CD4-positive, alpha-beta memory T cell (primary cell): ENCODE measurements at regions of chr14 and their contacts with region 1.

Region 1: GRCh38 chr14:71753126-71753830 is 179.0 kb upstream of the RGS6 start:
- DNase-seq: peak; percentile 53 to 62 (median 58)
- H3K4me3 ChIP-seq: no peak overlapping the region
- H3K4me3 Mint-ChIP-seq: no peak overlapping the region
- H3K27ac ChIP-seq: no peak overlapping the region
- H3K27ac Mint-ChIP-seq: no peak overlapping the region
- H3K4me1 ChIP-seq: peaks cover 6% of the 10 kb centered on the region
- H3K4me1 Mint-ChIP-seq: no peaks in the 10 kb centered on the region
- H3K27me3 ChIP-seq: no peaks in the 10 kb centered on the region
- H3K27me3 Mint-ChIP-seq: peaks cover 0 to 2% of the 10 kb centered on the region in 2 donors

Region 2: GRCh38 chr14:71103662-71104484 is 649.4 kb before region 1 on chr14:
- CTCF ChIA-PET with region 1: interaction called, 6 read pairs
- POLR2A ChIA-PET with region 1: no interaction called
- intact Hi-C with region 1: loop called (anchors 1 kb)
- DNase-seq: peak in 4 of 5 donors; percentile 40 to 50 (median 47)
- H3K4me3 ChIP-seq: no peak overlapping the region
- H3K4me3 Mint-ChIP-seq: no peak overlapping the region
- H3K27ac ChIP-seq: no peak overlapping the region
- H3K27ac Mint-ChIP-seq: peak overlapping the region in 4 of 7 donors; percentile 11 to 22 (median 16)
- H3K4me1 ChIP-seq: peaks cover 8% of the 10 kb centered on the region
- H3K4me1 Mint-ChIP-seq: peaks cover 10 to 24% (median 18%) of the 10 kb centered on the region in 4 donors
- H3K27me3 ChIP-seq: no peaks in the 10 kb centered on the region
- H3K27me3 Mint-ChIP-seq: no peaks in the 10 kb centered on the region

Region 3: DNA sequence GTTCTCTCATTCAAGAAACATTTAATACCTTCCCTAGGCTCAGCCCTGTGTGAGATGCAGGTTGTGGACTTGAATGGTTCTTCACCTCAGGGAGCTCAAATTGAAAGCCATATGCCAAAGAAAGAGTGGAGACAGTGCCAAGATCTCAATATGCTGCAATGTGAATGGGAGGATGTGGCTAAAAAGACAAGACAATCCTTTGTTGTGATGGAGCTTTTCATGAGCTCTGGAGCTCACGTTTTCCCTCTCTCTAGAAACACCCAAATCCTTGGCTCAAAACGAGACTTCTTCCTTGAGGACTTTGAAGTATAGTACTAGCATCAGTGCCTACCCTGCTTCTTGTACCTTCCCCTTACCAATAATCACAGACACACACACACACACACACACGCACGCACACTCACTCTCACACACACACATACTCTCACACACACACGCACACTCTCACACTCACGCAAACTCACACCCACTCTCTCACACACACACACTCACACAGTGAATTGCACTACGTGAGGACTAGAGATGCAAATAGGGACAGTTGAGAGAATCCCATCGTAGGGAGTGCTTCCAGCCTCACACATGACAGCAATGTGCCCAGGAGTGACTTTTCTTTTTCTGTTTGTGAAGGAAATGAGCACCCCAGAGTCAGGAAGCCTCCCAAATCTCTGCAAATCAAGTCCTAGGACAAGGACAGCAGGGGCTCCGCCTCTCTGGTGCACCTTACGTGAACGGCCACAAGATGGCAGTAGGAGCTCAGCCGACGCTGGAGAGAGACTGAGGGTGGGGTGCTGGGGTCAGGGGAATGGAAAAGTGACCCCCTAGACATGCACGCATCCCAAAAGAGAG is 614.6 kb before region 1 on chr14:
- CTCF ChIA-PET with region 1: interaction called, 235 read pairs
- POLR2A ChIA-PET with region 1: interaction called, 4 read pairs
- intact Hi-C with region 1: loop called (anchors 1 kb)
- DNase-seq: peak; percentile 40 to 58 (median 48)
- H3K4me3 ChIP-seq: no peak overlapping the region
- H3K4me3 Mint-ChIP-seq: no peak overlapping the region
- H3K27ac ChIP-seq: no peak overlapping the region
- H3K27ac Mint-ChIP-seq: peak overlapping the region in 1 of 7 donors; percentile 10
- H3K4me1 ChIP-seq: peaks cover 25% of the 10 kb centered on the region
- H3K4me1 Mint-ChIP-seq: peaks cover 14 to 23% (median 22%) of the 10 kb centered on the region in 4 donors
- H3K27me3 ChIP-seq: no peaks in the 10 kb centered on the region
- H3K27me3 Mint-ChIP-seq: peaks cover 0 to 3% of the 10 kb centered on the region in 2 donors

Region 4: DNA sequence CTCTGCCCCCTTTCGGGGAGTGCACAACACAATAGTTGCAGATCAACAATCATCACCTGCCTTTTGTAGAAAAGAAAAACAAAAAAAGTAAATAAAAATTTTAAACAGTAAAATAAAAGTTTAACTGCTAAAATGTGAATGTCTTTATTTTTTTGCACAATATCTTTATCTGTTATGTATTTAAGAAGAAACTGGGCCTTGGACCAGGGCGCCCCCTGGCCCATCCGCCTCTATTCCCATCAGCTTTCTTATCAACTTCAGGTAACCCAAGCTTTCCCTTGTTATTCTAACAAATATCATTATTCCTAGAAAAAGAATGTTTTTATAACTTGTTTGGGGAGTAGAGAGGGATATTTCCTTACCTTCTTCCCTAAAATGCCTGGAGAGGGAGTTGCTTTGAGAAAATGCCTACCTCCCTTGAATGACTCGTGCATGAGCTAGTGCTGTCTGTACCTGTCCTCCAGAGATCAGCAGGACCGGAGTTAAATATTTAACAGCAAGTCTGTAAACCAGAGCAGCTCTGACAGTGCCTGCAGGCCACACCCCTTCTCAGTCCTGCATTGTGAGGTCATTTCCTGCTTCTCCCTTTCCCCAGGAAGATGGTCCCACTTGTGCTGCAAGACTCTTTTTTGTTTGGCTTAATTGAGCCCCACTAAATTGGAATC is 13.9 kb before region 1 on chr14:
- CTCF ChIA-PET with region 1: interaction called, 19 read pairs
- POLR2A ChIA-PET with region 1: interaction called, 4 read pairs
- intact Hi-C with region 1: no loop called
- DNase-seq: no peak
- H3K4me3 ChIP-seq: no peak overlapping the region
- H3K4me3 Mint-ChIP-seq: no peak overlapping the region
- H3K27ac ChIP-seq: no peak overlapping the region
- H3K27ac Mint-ChIP-seq: peak overlapping the region in 2 of 7 donors; percentile 30 to 63
- H3K4me1 ChIP-seq: no peaks in the 10 kb centered on the region
- H3K4me1 Mint-ChIP-seq: peaks cover 0 to 1% (median 0%) of the 10 kb centered on the region in 4 donors
- H3K27me3 ChIP-seq: no peaks in the 10 kb centered on the region
- H3K27me3 Mint-ChIP-seq: peaks cover 0 to 4% of the 10 kb centered on the region in 2 donors

Region 5: GRCh38 chr14:71764701-71765382 is 11.6 kb after region 1 on chr14:
- CTCF ChIA-PET with region 1: interaction called, 10 read pairs
- POLR2A ChIA-PET with region 1: no interaction called
- intact Hi-C with region 1: no loop called
- DNase-seq: no peak
- H3K4me3 ChIP-seq: no peak overlapping the region
- H3K4me3 Mint-ChIP-seq: no peak overlapping the region
- H3K27ac ChIP-seq: no peak overlapping the region
- H3K27ac Mint-ChIP-seq: no peak overlapping the region
- H3K4me1 ChIP-seq: no peaks in the 10 kb centered on the region
- H3K4me1 Mint-ChIP-seq: no peaks in the 10 kb centered on the region
- H3K27me3 ChIP-seq: no peaks in the 10 kb centered on the region
- H3K27me3 Mint-ChIP-seq: peaks cover 16 to 26% of the 10 kb centered on the region in 2 donors

Region 6: DNA sequence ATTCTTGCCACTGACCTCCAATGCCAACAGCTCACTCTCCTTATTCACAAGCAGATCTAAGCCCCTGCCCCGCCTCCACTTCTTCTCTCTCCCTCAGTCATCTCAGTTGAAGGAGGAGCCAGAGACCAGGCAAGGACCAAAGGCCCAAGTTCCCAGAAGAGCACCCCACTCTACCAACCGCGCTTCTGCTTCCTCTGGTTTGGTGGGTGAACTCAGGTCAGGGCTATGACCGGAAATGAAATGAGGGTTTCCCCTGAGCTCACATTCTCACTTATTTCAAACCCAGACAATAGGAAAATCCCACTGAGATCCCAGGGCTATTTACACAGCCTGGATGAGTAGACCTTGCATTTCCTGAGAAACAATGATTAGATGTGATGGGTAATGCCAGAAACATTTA is 1130.7 kb after region 1 on chr14:
- CTCF ChIA-PET with region 1: no interaction called
- POLR2A ChIA-PET with region 1: no interaction called
- intact Hi-C with region 1: no loop called
- DNase-seq: no peak
- H3K4me3 ChIP-seq: no peak overlapping the region
- H3K4me3 Mint-ChIP-seq: no peak overlapping the region
- H3K27ac ChIP-seq: no peak overlapping the region
- H3K27ac Mint-ChIP-seq: no peak overlapping the region
- H3K4me1 ChIP-seq: no peaks in the 10 kb centered on the region
- H3K4me1 Mint-ChIP-seq: peaks cover 0 to 4% (median under 1%) of the 10 kb centered on the region in 4 donors
- H3K27me3 ChIP-seq: no peaks in the 10 kb centered on the region
- H3K27me3 Mint-ChIP-seq: peaks cover 0 to 5% of the 10 kb centered on the region in 2 donors